ENCODE measurements at regions of chr7 and their contacts with region 1.

Region 1: GRCh38 chr7:129218514-129219062 is 6.2 kb upstream of the AHCYL2 start:
- DNase-seq: peak; percentile 77

Region 2: DNA sequence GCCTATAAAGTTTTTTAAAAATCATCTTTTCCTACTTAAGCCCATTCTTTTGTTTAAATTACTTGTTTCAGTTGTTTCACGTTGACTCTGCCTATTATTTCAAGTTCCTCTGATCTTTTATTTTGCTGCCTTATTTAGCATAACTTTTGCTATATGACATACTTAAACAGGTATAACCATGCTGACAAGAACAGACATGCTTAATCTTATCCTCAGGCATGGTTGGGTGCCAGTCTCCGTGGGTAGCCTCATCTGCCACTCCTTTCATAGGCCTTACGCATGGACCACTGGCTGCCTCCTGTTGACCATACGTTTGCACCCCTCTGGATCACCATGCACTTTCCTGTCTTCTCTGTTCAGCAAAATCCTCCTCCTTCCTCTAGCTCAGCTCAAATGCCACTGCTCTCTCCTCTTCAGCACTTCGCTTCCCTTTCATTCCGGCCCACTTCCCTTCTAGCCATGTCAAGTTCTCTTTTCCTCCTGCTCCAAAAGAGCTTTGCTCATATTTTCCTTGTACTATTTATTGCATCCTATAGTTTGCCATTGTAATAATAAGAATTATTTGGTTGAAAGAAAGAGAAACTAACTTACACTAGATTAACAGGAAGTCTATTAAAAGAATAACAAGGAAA is 84.1 kb before region 1 on chr7:
- CTCF ChIA-PET with region 1: no interaction called
- POLR2A ChIA-PET with region 1: no interaction called
- DNase-seq: no peak

Region 3: GRCh38 chr7:129298268-129298893 is 79.8 kb after region 1 on chr7:
- CTCF ChIA-PET with region 1: interaction called, 21 read pairs
- POLR2A ChIA-PET with region 1: interaction called, 4 read pairs
- DNase-seq: peak; percentile 42